CD4-positive, alpha-beta T cell (primary cell): ENCODE measurements at regions of chr17 and their contacts with region 1.

Region 1: DNA sequence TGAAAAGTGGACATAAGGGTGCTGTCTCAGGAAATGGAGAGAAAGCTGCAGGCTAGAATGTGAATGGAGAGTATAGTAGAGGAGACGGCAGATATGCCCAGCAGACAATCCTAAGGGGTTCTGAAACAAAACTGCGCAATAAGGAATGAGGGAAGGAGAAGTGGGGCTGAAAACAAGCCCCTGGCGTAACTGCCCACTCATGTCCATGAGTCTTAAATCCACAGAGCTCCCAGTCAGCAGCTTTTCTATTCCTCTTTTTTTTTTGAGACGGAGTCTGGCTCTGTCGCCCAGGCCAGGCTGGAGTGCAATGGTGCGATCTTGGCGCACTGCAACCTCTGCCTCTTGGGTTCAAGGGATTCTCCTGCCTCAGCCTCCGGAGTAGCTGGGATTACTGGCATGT is 5.9 kb downstream of the STRADA start:
- DNase-seq: no peak
- ATAC-seq: no peak
- H3K4me3 ChIP-seq: no peak overlapping the region
- H3K4me3 Mint-ChIP-seq: no peak overlapping the region
- H3K27ac ChIP-seq: no peak overlapping the region
- H3K27ac Mint-ChIP-seq: no peak overlapping the region
- H3K4me1 ChIP-seq: peaks cover 10% of the 10 kb centered on the region
- H3K4me1 Mint-ChIP-seq: peaks cover 28% of the 10 kb centered on the region
- H3K27me3 ChIP-seq: no peaks in the 10 kb centered on the region
- H3K27me3 Mint-ChIP-seq: no peaks in the 10 kb centered on the region
- CTCF ChIP-seq: no peak

Region 2: GRCh38 chr17:63714547-63715277 is 21.0 kb before region 1 on chr17:
- CTCF ChIA-PET with region 1: interaction called, 12 read pairs
- POLR2A ChIA-PET with region 1: interaction called, 24 read pairs
- intact Hi-C with region 1: no loop called
- DNase-seq: no peak
- ATAC-seq: no peak
- H3K4me3 ChIP-seq: no peak overlapping the region
- H3K4me3 Mint-ChIP-seq: no peak overlapping the region
- H3K27ac ChIP-seq: no peak overlapping the region
- H3K27ac Mint-ChIP-seq: no peak overlapping the region
- H3K4me1 ChIP-seq: peaks cover 13% of the 10 kb centered on the region
- H3K4me1 Mint-ChIP-seq: peaks cover 12% of the 10 kb centered on the region
- H3K27me3 ChIP-seq: no peaks in the 10 kb centered on the region
- H3K27me3 Mint-ChIP-seq: no peaks in the 10 kb centered on the region
- CTCF ChIP-seq: no peak